Activated CD8-positive, alpha-beta T cell treated with anti-CD3 and anti-CD28 coated beads for 36 hours (primary cell): ENCODE measurements at regions of chr1 and their contacts with region 1.

Region 1: GRCh38 chr1:200971955-200972711 is 51.4 kb downstream of the KIF21B start:
- DNase-seq: peak; percentile 71
- ATAC-seq: no peak
- H3K4me3 Mint-ChIP-seq: no peak overlapping the region
- H3K27ac Mint-ChIP-seq: no peak overlapping the region
- H3K4me1 Mint-ChIP-seq: peaks cover 27% of the 10 kb centered on the region
- H3K27me3 Mint-ChIP-seq: no peaks in the 10 kb centered on the region
- CTCF ChIP-seq: peak; percentile 99

Region 2: GRCh38 chr1:200992382-200993048 is 20.4 kb after region 1 on chr1:
- CTCF ChIA-PET with region 1: interaction called, 13 read pairs
- POLR2A ChIA-PET with region 1: interaction called, 5 read pairs
- intact Hi-C with region 1: no loop called
- DNase-seq: no peak
- ATAC-seq: no peak
- H3K4me3 Mint-ChIP-seq: no peak overlapping the region
- H3K27ac Mint-ChIP-seq: no peak overlapping the region
- H3K4me1 Mint-ChIP-seq: no peaks in the 10 kb centered on the region
- H3K27me3 Mint-ChIP-seq: no peaks in the 10 kb centered on the region
- CTCF ChIP-seq: no peak

Region 3: DNA sequence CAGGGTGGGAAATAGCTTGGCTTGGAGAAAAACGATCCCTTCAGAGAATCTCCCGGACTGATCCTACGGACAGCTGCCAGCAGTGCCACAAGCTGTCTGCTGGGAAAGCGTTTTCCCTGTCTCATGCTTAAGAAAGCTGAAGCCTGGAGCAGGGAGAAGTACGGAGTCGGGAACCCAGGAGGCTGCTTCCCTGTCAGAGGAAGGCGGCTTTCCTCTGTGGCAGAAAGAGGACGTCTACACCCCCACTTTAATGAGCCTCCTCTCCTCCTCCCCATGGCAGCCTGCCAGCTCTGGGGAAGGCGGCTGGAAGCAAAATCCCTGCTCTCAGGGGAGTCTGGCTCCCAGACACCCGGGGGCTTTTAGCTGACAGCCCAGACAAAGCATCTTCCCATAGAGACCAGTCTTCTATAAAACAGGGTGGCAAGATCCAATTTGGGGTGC is 44.1 kb after region 1 on chr1:
- CTCF ChIA-PET with region 1: interaction called, 109 read pairs
- POLR2A ChIA-PET with region 1: interaction called, 6 read pairs
- intact Hi-C with region 1: no loop called
- DNase-seq: no peak
- ATAC-seq: no peak
- H3K4me3 Mint-ChIP-seq: peak overlapping the region; percentile 68
- H3K27ac Mint-ChIP-seq: peak overlapping the region; percentile 97
- H3K4me1 Mint-ChIP-seq: peaks cover 92% of the 10 kb centered on the region
- H3K27me3 Mint-ChIP-seq: no peaks in the 10 kb centered on the region
- CTCF ChIP-seq: no peak

Region 4: GRCh38 chr1:201042779-201043461 is 70.8 kb after region 1 on chr1:
- CTCF ChIA-PET with region 1: interaction called, 363 read pairs
- POLR2A ChIA-PET with region 1: interaction called, 3 read pairs
- intact Hi-C with region 1: loop called (anchors 1 kb)
- DNase-seq: peak; percentile 86
- ATAC-seq: peak; percentile 97
- H3K4me3 Mint-ChIP-seq: no peak overlapping the region
- H3K27ac Mint-ChIP-seq: no peak overlapping the region
- H3K4me1 Mint-ChIP-seq: peaks cover 2% of the 10 kb centered on the region
- H3K27me3 Mint-ChIP-seq: no peaks in the 10 kb centered on the region
- CTCF ChIP-seq: peak; percentile 77

Region 5: DNA sequence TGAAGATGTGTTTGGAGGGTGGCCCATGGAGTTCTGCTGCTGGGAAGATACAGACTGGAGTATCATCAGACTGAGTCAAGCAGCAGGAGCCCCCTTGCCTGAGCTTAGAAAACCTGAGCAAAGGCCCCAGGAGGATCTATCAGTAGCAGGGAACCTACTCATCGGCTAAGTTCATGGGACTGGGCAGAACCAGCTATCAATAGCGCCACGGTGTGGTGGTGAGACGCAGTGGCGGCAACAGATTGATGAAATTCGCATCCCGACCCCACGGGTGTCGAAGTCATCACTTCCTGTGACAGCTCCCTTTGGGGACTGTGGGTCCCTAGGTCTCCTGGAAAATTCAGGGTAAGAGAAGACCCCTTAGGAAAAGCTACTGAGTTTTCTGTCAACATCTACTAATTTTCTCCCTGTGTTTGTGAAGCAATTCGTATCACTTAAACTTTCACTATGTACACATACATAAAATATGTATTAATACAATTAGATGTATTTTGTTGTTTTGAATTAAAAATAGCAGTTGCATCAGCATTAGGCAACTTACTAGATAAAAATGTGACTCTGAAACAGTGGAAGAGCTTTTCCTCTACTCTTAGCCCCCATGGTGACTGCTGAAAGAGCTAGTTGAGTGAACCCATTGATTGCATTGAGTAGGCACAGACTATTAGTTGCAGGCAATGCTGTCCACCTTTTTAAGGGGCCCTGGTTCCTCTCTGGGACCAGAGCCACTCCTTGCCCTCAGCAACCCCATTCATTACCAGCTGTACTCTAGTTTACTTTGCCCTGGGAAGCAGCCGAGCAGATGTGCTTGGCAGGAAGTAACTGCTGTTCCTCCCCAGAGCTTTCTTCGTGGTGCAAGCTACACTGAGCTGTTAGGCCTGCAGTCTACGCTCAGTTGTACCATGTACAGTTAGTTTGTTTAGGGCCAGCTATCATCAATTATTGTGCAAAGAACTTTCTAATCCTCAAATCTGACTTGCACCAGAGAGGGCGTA is 147.4 kb after region 1 on chr1:
- CTCF ChIA-PET with region 1: interaction called, 39 read pairs
- POLR2A ChIA-PET with region 1: interaction called, 4 read pairs
- intact Hi-C with region 1: loop called (anchors 10 kb)
- DNase-seq: peak; percentile 76
- ATAC-seq: peak; percentile 69
- H3K4me3 Mint-ChIP-seq: no peak overlapping the region
- H3K27ac Mint-ChIP-seq: no peak overlapping the region
- H3K4me1 Mint-ChIP-seq: peaks cover 8% of the 10 kb centered on the region
- H3K27me3 Mint-ChIP-seq: peaks cover 4% of the 10 kb centered on the region
- CTCF ChIP-seq: peak; percentile 72